Activated CD4-positive, alpha-beta T cell treated with anti-CD3 and anti-CD28 coated beads, Interleukin-2, amount 10 ng/mL, durations not matched to agents 24 days and 14 days (primary cell): ENCODE measurements at regions of chr3 and their contacts with region 1.

Region 1: GRCh38 chr3:158091531-158091930 is 14.7 kb downstream of the SHOX2 start:
- DNase-seq: no peak
- H3K4me3 Mint-ChIP-seq: no peak overlapping the region
- H3K27ac Mint-ChIP-seq: no peak overlapping the region
- H3K4me1 Mint-ChIP-seq: peaks cover 4% of the 10 kb centered on the region
- H3K27me3 Mint-ChIP-seq: peaks cover 74% of the 10 kb centered on the region

Region 2: DNA sequence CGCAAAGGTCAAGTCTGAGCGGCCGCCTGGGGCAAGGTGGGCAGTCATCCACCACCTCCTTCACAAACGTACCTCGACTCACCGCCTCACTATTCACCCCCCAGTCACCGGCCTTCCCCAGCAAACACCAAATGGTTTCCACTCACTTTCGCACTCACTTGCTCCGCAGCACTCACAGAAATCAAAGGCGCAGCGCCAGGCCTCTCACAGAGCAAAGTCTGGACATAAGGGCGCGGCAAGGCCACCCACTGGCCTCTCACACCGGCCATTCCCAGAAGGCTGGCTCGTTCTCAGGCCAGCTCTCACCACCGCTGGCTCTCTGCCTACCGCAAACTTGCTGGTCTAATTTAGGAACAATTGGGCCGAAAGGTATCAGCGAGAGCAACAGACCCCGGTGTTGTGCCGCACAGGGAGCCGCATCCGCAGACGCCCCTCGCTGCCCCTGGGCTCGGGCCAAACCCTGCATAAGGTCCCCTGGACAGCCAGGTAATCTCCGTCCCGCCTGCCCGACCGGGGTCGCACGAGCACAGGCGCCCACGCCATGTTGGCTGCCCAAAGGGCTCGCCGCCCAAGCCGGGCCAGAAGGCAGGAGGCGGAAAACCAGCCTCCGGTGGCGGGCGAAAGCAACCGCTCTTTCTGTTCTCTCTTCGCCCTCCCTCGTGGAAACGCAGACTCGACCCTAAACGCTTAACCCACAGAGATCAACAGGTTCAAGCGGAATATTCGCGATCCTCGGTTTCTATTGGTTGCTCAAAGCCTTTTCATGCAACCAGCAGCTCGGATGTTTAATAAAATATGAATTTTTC is 11.8 kb after region 1 on chr3:
- intact Hi-C with region 1: loop called (anchors 1 kb)
- DNase-seq: peak; percentile 69
- H3K4me3 Mint-ChIP-seq: peak overlapping the region; percentile 44
- H3K27ac Mint-ChIP-seq: peak overlapping the region; percentile 84
- H3K4me1 Mint-ChIP-seq: peaks cover 34% of the 10 kb centered on the region
- H3K27me3 Mint-ChIP-seq: peaks cover 86% of the 10 kb centered on the region

Region 3: GRCh38 chr3:158313338-158313927 is 221.9 kb after region 1 on chr3:
- intact Hi-C with region 1: loop called (anchors 5 kb)
- DNase-seq: no peak
- H3K4me3 Mint-ChIP-seq: no peak overlapping the region
- H3K27ac Mint-ChIP-seq: no peak overlapping the region
- H3K4me1 Mint-ChIP-seq: no peaks in the 10 kb centered on the region
- H3K27me3 Mint-ChIP-seq: no peaks in the 10 kb centered on the region